ENCODE measurements at regions of chr4 and their contacts with region 1.

Region 1: GRCh38 chr4:158624889-158625478 is 46.7 kb downstream of the C4orf46 start:
- DNase-seq: no peak
- ATAC-seq: peak; percentile 47
- H3K4me3 Mint-ChIP-seq: no peak overlapping the region
- H3K27ac Mint-ChIP-seq: no peak overlapping the region
- H3K4me1 Mint-ChIP-seq: no peaks in the 10 kb centered on the region
- H3K27me3 Mint-ChIP-seq: peaks cover 5% of the 10 kb centered on the region
- CTCF ChIP-seq: no peak

Region 2: DNA sequence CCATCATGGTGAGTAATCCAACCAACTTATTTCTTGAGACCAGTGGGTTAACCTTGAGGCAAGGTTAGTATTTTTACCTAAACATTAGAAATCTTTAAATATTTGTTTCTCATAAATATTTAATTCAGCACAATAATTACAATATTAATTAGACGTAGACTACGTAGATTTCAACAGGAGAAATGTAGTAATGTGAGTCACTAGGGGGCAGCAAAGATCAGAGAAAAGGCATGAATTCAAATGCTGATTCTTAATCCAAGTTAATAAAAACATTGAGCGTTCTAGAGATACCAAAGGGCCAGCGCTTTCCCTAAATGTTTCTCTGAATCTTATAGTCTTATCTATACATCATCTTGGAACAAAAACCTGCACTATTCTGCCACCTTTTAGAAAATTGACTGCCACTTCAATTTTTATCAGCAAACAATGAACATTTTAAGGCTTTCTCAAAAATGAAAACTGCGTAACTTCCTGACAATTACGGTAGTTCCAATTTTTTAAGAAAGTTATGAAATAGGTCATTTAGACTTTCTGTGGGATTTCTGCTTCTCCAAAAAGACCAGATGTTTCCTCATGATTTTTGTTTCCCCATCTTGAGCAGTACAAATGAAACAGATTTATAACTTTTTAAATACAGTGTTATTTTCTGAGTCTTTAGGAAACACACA is 632.8 kb before region 1 on chr4:
- CTCF ChIA-PET with region 1: no interaction called
- POLR2A ChIA-PET with region 1: no interaction called
- intact Hi-C with region 1: loop called (anchors 1 kb)
- DNase-seq: no peak
- ATAC-seq: no peak
- H3K4me3 Mint-ChIP-seq: no peak overlapping the region
- H3K27ac Mint-ChIP-seq: no peak overlapping the region
- H3K4me1 Mint-ChIP-seq: no peaks in the 10 kb centered on the region
- H3K27me3 Mint-ChIP-seq: peaks cover 2% of the 10 kb centered on the region
- CTCF ChIP-seq: no peak

Region 3: DNA sequence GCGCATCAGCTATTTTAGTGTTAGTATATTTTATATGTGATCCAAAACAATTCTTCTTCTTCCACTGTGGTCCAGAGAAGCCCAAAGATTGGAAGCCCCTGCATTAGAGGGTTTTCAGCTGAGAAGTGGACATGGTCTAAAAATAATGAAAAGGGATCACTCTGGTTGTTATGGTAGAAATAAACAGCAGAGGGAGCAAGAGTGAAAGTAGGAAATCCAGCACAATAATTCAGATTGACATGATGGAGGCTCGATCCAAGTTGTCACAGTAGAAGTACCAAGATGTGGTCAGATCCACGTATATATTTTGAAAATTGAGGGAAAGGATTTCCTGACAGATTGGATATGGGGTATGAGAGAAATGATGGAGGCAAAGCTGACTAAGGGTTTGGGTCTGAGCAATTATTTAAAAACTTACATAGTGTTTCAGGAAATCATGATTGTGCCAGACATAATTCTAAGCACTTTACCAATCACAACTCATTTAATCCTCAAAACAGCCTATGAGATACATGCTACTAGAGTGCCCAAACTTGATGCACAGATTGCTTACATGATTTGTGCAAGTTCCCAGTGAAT is 431.7 kb before region 1 on chr4:
- CTCF ChIA-PET with region 1: no interaction called
- POLR2A ChIA-PET with region 1: no interaction called
- intact Hi-C with region 1: loop called (anchors 5 kb)
- DNase-seq: no peak
- ATAC-seq: no peak
- H3K4me3 Mint-ChIP-seq: no peak overlapping the region
- H3K27ac Mint-ChIP-seq: no peak overlapping the region
- H3K4me1 Mint-ChIP-seq: no peaks in the 10 kb centered on the region
- H3K27me3 Mint-ChIP-seq: no peaks in the 10 kb centered on the region
- CTCF ChIP-seq: no peak

Region 4: DNA sequence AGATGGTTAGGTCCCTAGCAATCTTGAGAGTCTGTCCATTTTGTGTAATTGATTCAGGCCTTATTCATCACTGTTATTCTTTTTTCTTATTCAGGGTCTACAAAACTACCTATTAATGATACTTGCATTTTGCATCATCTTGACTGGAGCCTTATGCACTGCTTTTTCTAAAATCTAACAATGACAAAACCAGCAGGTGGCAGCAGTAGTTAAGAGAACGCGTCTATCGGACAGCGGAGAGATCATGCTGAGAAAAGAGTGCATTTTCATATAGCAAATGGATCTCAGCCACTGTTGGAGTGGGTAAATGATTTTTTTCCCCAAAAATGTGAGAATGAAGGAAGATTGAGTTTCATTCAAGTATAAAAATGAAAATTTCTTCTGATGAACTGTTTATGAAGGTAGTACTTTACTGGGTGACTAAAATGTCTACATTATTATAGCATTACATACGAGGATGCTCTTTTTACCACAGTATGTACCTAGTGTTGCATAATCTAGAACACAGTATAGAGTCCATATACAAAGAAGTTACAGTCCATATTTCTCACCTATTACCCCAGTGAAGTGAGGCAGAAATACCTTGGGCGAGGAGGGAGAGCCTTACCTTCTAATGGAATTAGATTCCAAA is 371.5 kb before region 1 on chr4:
- CTCF ChIA-PET with region 1: no interaction called
- POLR2A ChIA-PET with region 1: no interaction called
- intact Hi-C with region 1: loop called (anchors 1 kb)
- DNase-seq: no peak
- ATAC-seq: peak; percentile 42
- H3K4me3 Mint-ChIP-seq: no peak overlapping the region
- H3K27ac Mint-ChIP-seq: no peak overlapping the region
- H3K4me1 Mint-ChIP-seq: peaks cover 5% of the 10 kb centered on the region
- H3K27me3 Mint-ChIP-seq: peaks cover 12% of the 10 kb centered on the region
- CTCF ChIP-seq: no peak

Region 5: GRCh38 chr4:158259955-158260575 is 364.9 kb before region 1 on chr4:
- CTCF ChIA-PET with region 1: interaction called, 3 read pairs
- POLR2A ChIA-PET with region 1: no interaction called
- intact Hi-C with region 1: loop called (anchors 1 kb)
- DNase-seq: no peak
- ATAC-seq: no peak
- H3K4me3 Mint-ChIP-seq: no peak overlapping the region
- H3K27ac Mint-ChIP-seq: no peak overlapping the region
- H3K4me1 Mint-ChIP-seq: no peaks in the 10 kb centered on the region
- H3K27me3 Mint-ChIP-seq: no peaks in the 10 kb centered on the region
- CTCF ChIP-seq: no peak

Region 6: DNA sequence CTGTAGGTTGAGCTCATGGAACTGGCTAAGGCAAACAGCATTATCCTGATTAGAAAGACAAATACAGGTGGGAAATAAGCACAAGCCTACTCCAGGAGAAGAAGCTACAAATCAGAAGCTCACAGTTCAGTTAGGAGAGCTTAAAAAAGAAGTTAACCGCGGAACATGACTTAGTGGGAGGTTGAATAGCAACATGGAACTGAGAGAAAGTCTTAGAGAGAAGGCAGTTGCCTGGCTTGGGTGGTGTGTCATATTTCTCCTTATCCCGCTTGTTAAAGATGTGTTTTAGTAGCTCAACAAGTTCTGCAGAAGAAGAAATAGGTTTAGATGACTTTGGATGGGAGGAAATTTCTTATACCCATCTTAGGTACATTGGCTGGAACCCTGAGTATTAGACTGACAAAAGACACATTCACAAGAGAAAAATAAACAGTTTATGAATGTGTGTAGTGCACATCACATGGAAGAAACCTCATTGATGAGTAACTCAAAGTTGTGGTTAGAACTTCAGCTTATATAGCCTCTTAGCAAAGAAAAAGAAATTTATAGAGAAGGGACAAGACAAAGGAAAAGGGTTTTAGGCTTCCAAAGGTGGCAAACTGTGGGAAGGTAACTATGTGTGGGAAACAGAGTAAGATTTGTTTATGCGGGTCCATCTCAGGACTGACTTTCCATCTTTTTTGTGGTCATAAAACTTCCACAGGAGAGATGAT is 140.7 kb before region 1 on chr4:
- CTCF ChIA-PET with region 1: no interaction called
- POLR2A ChIA-PET with region 1: no interaction called
- intact Hi-C with region 1: no loop called
- DNase-seq: no peak
- ATAC-seq: no peak
- H3K4me3 Mint-ChIP-seq: no peak overlapping the region
- H3K27ac Mint-ChIP-seq: no peak overlapping the region
- H3K4me1 Mint-ChIP-seq: no peaks in the 10 kb centered on the region
- H3K27me3 Mint-ChIP-seq: no peaks in the 10 kb centered on the region
- CTCF ChIP-seq: no peak

Region 7: GRCh38 chr4:159010563-159011260 is 385.7 kb after region 1 on chr4:
- CTCF ChIA-PET with region 1: no interaction called
- POLR2A ChIA-PET with region 1: no interaction called
- intact Hi-C with region 1: no loop called
- DNase-seq: no peak
- ATAC-seq: no peak
- H3K4me3 Mint-ChIP-seq: no peak overlapping the region
- H3K27ac Mint-ChIP-seq: no peak overlapping the region
- H3K4me1 Mint-ChIP-seq: no peaks in the 10 kb centered on the region
- H3K27me3 Mint-ChIP-seq: peaks cover 21% of the 10 kb centered on the region
- CTCF ChIP-seq: no peak

Measured in activated B cell treated with CpG ODN at 0.5 μM for 24 hours (primary cell).